Activated CD4-positive, alpha-beta memory T cell treated with anti-CD3 and anti-CD28 coated beads for 36 hours (primary cell): ENCODE measurements at regions of chr20 and their contacts with region 1.

Region 1: DNA sequence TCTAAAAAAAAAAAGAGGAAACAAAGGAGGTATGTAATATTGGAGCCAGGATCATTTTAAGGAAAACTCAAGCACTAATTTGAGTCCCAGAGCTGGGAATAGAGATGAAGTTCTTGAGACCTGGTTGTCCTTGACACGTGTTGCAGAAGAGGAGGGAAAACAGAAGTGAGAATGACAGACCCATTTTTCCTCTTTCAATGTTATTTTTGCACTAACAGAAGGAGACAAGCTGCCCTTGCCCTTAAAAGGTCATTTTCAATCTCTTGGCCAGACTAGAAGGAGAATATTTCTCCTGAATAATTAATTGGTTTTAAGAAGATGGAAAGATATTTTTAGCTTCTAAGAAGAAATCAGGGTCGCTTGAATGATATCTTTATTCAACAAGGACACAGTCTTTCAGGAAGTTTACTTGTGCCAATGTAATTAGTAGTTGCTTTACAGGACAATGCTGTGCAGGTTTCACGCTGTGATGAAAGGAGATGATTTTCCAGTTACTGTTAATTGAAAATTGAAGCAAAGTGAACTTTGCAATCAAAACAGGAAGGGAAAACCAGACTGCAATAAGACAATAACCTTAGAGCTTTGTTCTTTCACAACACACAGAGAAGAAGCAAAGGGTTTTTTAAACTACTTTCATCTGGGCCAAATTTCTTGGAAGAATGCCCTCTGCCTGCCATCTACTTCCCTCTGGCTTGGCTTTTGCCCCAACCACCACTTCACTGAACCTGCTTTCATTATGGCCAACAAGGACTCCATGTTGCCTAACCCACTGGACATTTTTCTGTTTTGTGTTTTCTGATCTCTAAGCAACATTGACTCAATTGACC is 107.8 kb upstream of the SHLD1 start:
- DNase-seq: no peak
- H3K4me3 Mint-ChIP-seq: no peak overlapping the region
- H3K27ac Mint-ChIP-seq: peak overlapping the region; percentile 1
- H3K4me1 Mint-ChIP-seq: peaks cover 34% of the 10 kb centered on the region
- H3K27me3 Mint-ChIP-seq: no peaks in the 10 kb centered on the region

Region 2: GRCh38 chr20:5557123-5557522 is 85.2 kb before region 1 on chr20:
- CTCF ChIA-PET with region 1: no interaction called
- POLR2A ChIA-PET with region 1: no interaction called
- intact Hi-C with region 1: no loop called
- DNase-seq: peak; percentile 79
- H3K4me3 Mint-ChIP-seq: no peak overlapping the region
- H3K27ac Mint-ChIP-seq: peak overlapping the region; percentile 21
- H3K4me1 Mint-ChIP-seq: peaks cover 5% of the 10 kb centered on the region
- H3K27me3 Mint-ChIP-seq: no peaks in the 10 kb centered on the region

Region 3: GRCh38 chr20:5608442-5609161 is 33.8 kb before region 1 on chr20:
- CTCF ChIA-PET with region 1: interaction called, 3 read pairs
- POLR2A ChIA-PET with region 1: no interaction called
- intact Hi-C with region 1: loop called (anchors 1 kb)
- DNase-seq: no peak
- H3K4me3 Mint-ChIP-seq: peak overlapping the region; percentile 87
- H3K27ac Mint-ChIP-seq: peak overlapping the region; percentile 98
- H3K4me1 Mint-ChIP-seq: peaks cover 52% of the 10 kb centered on the region
- H3K27me3 Mint-ChIP-seq: no peaks in the 10 kb centered on the region

Region 4: GRCh38 chr20:5621305-5621704 is 21.1 kb before region 1 on chr20:
- CTCF ChIA-PET with region 1: no interaction called
- POLR2A ChIA-PET with region 1: no interaction called
- intact Hi-C with region 1: loop called (anchors 2 kb)
- DNase-seq: no peak
- H3K4me3 Mint-ChIP-seq: no peak overlapping the region
- H3K27ac Mint-ChIP-seq: no peak overlapping the region
- H3K4me1 Mint-ChIP-seq: peaks cover 11% of the 10 kb centered on the region
- H3K27me3 Mint-ChIP-seq: no peaks in the 10 kb centered on the region

Region 5: GRCh38 chr20:5658912-5659345 is 16.6 kb after region 1 on chr20:
- CTCF ChIA-PET with region 1: interaction called, 4 read pairs
- POLR2A ChIA-PET with region 1: interaction called, 7 read pairs
- intact Hi-C with region 1: loop called (anchors 2 kb)
- DNase-seq: peak; percentile 71
- H3K4me3 Mint-ChIP-seq: no peak overlapping the region
- H3K27ac Mint-ChIP-seq: peak overlapping the region; percentile 66
- H3K4me1 Mint-ChIP-seq: peaks cover 26% of the 10 kb centered on the region
- H3K27me3 Mint-ChIP-seq: no peaks in the 10 kb centered on the region

Region 6: DNA sequence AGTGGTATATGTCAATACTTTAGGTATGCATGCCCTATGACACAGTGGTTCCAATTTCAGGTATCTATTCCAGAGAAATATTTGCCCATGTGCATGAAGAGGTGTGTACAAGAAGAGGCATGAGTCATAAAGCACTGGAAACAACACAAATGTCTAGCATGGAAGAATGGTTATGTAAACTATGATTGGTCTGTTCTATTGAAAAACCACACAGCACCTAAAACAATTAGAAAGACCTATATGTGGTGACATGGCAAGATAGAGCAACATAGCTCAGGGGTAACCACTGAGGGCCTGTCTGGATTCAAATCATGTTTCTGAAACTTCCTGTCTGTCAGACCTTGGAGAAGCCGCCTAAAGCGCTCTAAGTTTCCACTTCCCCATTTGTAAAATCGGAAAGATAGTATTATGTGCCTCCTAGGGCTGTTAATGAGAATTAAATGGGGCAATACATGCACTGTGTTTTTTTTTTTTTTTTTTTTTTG is 31.9 kb after region 1 on chr20:
- CTCF ChIA-PET with region 1: no interaction called
- POLR2A ChIA-PET with region 1: no interaction called
- intact Hi-C with region 1: loop called (anchors 1 kb)
- DNase-seq: peak; percentile 49
- H3K4me3 Mint-ChIP-seq: no peak overlapping the region
- H3K27ac Mint-ChIP-seq: peak overlapping the region; percentile 80
- H3K4me1 Mint-ChIP-seq: peaks cover 13% of the 10 kb centered on the region
- H3K27me3 Mint-ChIP-seq: no peaks in the 10 kb centered on the region

Region 7: DNA sequence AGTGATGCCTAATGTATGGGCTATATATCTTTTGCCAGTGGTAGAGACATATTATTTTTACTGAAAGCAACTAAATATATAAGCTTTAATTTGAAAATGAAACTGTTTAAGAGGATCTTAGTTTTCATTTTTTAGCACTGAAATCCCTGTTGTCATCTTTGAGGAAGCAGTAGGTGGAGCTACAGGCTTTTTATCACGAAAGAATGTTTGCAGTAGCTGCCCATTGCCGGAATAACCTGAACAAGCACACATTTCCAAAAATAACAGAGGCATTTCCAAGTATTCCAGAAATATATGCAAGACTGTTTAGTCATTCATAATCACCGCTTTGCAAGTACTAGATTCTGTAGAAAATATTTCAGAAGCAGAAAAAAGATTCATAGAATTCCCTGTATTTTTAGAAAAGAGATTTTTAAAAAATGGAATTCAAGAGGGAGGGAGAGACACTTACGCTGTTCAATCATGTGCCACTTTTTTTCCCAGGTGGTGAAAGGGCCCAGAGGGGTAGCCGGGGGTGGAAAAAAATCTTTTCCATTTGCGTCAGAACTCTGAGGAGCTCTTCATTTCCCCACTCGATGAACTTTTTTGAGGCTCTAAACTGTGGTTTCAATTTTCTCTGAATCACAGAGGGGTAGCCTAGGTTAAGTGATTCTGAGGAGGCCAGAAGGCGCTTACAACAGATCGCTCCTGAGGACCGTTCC is 623.0 kb after region 1 on chr20:
- CTCF ChIA-PET with region 1: no interaction called
- POLR2A ChIA-PET with region 1: no interaction called
- intact Hi-C with region 1: no loop called
- DNase-seq: no peak
- H3K4me3 Mint-ChIP-seq: no peak overlapping the region
- H3K27ac Mint-ChIP-seq: no peak overlapping the region
- H3K4me1 Mint-ChIP-seq: no peaks in the 10 kb centered on the region
- H3K27me3 Mint-ChIP-seq: peaks cover 2% of the 10 kb centered on the region